ENCODE measurements at regions of chr16 and their contacts with region 1.

Region 1: GRCh38 chr16:56708525-56709442 is 21.1 kb upstream of the NUP93 start:
- DNase-seq: no peak
- ATAC-seq: no peak
- H3K4me3 ChIP-seq: no peak overlapping the region
- H3K27ac ChIP-seq: no peak overlapping the region
- H3K4me1 ChIP-seq: no peaks in the 10 kb centered on the region
- H3K27me3 ChIP-seq: no peaks in the 10 kb centered on the region
- CTCF ChIP-seq: no peak
- POLR2A ChIP-seq: no peak

Region 2: DNA sequence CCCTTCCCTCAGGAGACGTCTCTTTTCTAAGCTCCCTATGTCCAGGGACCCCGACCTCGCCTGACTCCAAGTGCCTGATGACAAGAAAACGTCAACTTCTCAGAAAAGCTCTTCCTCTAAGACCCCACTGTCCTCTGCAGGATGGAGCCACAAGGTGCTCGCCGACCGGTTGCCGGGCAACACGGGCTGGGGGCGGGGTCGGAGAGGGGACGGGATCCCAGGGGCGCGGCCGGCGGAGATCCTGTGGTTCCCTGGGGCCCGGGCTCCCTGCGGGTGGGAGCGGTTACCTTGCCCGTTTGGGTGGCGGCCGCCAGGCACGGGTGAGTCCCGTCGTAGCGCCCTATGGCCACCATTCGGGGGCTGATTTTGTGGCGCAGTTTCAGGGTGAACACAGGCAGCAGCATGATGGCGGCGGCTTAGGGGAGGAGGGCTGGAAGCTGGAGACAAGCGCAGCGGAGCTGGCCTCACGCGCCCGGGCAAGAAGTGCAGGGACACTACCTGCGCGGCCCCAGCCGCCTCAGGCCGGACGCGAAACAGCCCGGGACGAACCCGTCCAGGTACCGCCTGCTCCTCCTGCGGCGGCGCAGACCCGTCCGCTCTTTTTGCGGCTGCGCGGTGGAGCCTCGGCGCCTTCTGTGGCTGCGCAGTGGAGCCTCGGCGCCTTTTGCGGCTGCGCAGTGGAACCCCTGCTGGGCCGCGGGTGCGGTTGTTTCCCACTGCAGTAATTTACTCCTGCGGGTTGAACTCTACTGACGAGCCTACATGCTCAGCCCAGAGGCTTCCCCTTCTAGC is 189.1 kb before region 1 on chr16 and contains the start of gene BBS2:
- in situ Hi-C with region 1: loop called in 2 of 4 experiments (anchors 5 to 10 kb)
- intact Hi-C with region 1: no loop called
- DNase-seq: peak; percentile 79 to 85
- ATAC-seq: peak; percentile 88 to 90
- H3K4me3 ChIP-seq: peak within 1 kb of the TSS; percentile 90 to 99 (median 96)
- H3K27ac ChIP-seq: peak within 1 kb of the TSS; percentile 90 to 92 (median 91)
- H3K4me1 ChIP-seq: peaks cover 33 to 41% of the 10 kb centered on the region in 2 donors
- H3K27me3 ChIP-seq: no peaks in the 10 kb centered on the region
- CTCF ChIP-seq: peak in 1 of 5 experiments; percentile 12
- POLR2A ChIP-seq: peak; percentile 82 to 85
- total RNA-seq, gene BBS2: 25.2 to 52.0 (median 28.6) TPM

Region 3: GRCh38 chr16:56576585-56577293 is 132.0 kb before region 1 on chr16:
- in situ Hi-C with region 1: loop called in 1 of 4 experiments (anchors 10 kb)
- intact Hi-C with region 1: no loop called
- DNase-seq: peak; percentile 38 to 62
- ATAC-seq: peak; percentile 63 to 95
- H3K4me3 ChIP-seq: no peak overlapping the region
- H3K27ac ChIP-seq: no peak overlapping the region
- H3K4me1 ChIP-seq: no peaks in the 10 kb centered on the region
- H3K27me3 ChIP-seq: no peaks in the 10 kb centered on the region
- CTCF ChIP-seq: peak; percentile 66 to 78 (median 71)
- POLR2A ChIP-seq: no peak

Region 4: DNA sequence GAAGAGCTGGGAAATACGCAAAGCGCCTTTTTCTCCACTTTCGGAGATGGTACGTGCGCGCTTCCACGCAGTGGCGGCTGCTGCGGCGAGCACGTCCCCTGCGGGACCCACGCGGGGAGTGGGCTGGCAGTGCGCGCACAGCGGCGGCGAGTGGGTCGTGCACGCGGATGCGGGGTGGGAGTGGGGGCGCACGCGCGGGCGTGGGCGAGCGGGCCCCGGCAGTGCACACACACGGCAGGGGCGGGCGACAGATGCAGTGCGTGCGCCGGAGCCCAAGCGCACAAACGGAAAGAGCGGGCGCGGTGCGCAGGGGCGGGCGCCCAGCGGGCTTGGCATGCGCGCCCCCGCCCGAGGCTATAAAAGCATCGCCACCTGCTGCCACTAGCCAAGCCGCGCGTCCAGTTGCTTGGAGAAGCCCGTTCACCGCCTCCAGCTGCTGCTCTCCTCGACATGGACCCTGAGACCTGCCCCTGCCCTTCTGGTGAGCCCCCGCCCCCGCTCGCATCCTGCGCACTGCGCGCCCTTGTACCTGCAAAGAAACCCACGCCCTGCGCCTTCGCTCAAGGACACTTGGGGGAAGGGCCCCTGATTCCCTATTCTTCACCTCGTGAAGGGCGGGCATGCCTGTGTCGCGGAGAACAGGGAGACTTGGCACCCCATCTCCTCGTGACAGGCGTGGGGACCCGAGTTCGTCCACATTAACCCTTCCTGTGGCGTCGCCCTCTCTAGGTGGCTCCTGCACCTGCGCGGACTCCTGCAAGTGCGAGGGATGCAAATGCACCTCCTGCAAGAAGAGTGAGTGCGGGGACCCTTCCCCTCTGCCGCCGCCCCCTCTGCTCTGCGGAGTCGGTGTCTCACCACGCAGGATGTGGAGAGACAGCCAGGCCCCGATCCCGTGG is 119.4 kb before region 1 on chr16 and contains the start of gene MT3:
- in situ Hi-C with region 1: loop called in 1 of 4 experiments (anchors 10 kb)
- intact Hi-C with region 1: no loop called
- DNase-seq: no peak
- ATAC-seq: peak in 1 of 2 donors; percentile 27
- H3K4me3 ChIP-seq: peak within 1 kb of the TSS; percentile 19 to 57 (median 48)
- H3K27ac ChIP-seq: no peak within 1 kb of the TSS
- H3K4me1 ChIP-seq: peaks cover 4 to 6% of the 10 kb centered on the region in 2 donors
- H3K27me3 ChIP-seq: peaks cover 0 to 8% (median 4%) of the 10 kb centered on the region in 3 donors
- CTCF ChIP-seq: no peak
- POLR2A ChIP-seq: no peak
- total RNA-seq, gene MT3: not detected

Region 5: DNA sequence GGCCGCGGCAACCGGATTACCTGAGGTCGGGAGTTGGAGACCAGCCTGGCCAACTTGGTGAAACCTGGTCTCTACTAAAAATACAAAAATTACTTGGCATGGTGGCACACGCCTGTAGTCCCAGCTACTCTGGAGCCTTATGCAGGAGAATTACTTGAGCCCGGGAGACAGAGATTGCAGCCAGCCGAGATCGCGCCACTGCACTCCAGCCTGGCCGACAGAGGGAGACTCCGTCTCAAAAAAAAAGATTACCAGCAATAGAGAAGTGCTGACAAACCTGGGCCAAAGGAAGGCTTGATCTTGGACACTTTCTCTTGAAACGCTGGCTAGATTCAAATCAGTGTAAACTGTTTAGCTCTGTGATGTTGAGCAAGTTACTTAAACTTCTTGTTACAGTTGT is 34.9 kb before region 1 on chr16:
- in situ Hi-C with region 1: loop called in 2 of 4 experiments (anchors 5 kb)
- intact Hi-C with region 1: no loop called
- DNase-seq: peak in 1 of 2 donors; percentile 54
- ATAC-seq: peak; percentile 77 to 90
- H3K4me3 ChIP-seq: no peak overlapping the region
- H3K27ac ChIP-seq: no peak overlapping the region
- H3K4me1 ChIP-seq: peaks cover under 1 to 7% of the 10 kb centered on the region in 2 donors
- H3K27me3 ChIP-seq: peaks cover 12 to 33% (median 20%) of the 10 kb centered on the region in 3 donors
- CTCF ChIP-seq: peak; percentile 68 to 83 (median 80)
- POLR2A ChIP-seq: no peak

Measured in gastrocnemius medialis (tissue), 4 donors.